ENCODE measurements at regions of chr11 and their contacts with region 1.

Region 1: GRCh38 chr11:62372871-62373270 is 35.6 kb downstream of the ASRGL1 start:
- DNase-seq: no peak
- ATAC-seq: no peak
- H3K4me3 ChIP-seq: no peak overlapping the region
- H3K4me3 Mint-ChIP-seq: no peak overlapping the region
- H3K27ac ChIP-seq: no peak overlapping the region
- H3K27ac Mint-ChIP-seq: peak overlapping the region in 1 of 2 donors; percentile 48
- H3K4me1 ChIP-seq: peaks cover 7% of the 10 kb centered on the region
- H3K4me1 Mint-ChIP-seq: peaks cover 0 to 14% of the 10 kb centered on the region in 2 donors
- H3K27me3 ChIP-seq: no peaks in the 10 kb centered on the region
- H3K27me3 Mint-ChIP-seq: no peaks in the 10 kb centered on the region
- CTCF ChIP-seq: no peak

Region 2: DNA sequence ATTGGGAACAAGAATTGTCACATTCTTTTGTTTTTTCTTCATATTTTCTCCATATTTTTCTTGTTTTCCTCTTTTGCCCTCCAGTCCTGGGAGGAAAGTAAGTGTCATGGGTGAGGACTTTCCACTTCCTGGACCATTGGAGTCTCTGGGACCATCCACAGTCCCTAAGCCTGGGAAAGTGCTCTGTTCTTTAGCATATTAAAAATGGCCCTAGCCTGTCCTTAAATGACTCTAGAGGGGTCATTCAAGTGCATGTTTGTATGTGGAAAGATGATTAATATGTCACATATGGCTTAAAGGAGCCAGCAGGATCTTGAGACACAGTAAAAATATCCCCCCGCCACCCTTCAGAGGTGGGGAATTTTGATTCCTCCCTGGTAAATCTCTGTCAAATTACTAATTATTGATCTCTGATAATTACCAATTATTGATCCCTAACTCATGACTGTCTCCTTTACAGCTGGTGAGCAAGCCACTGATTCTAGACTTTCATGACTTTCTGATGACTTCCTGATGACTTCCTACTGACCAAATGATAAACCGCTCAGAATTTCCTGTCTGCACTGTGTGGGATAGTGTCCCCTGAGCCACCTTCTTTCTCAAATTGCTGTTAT is 202.8 kb before region 1 on chr11:
- intact Hi-C with region 1: loop called (anchors 5 kb)
- DNase-seq: no peak
- ATAC-seq: no peak
- H3K4me3 ChIP-seq: no peak overlapping the region
- H3K4me3 Mint-ChIP-seq: no peak overlapping the region
- H3K27ac ChIP-seq: no peak overlapping the region
- H3K27ac Mint-ChIP-seq: no peak overlapping the region
- H3K4me1 ChIP-seq: no peaks in the 10 kb centered on the region
- H3K4me1 Mint-ChIP-seq: peaks cover 4 to 5% of the 10 kb centered on the region in 2 donors
- H3K27me3 ChIP-seq: no peaks in the 10 kb centered on the region
- H3K27me3 Mint-ChIP-seq: peaks cover 23 to 54% of the 10 kb centered on the region in 2 donors
- CTCF ChIP-seq: no peak

Region 3: GRCh38 chr11:62315431-62315830 is 57.4 kb before region 1 on chr11:
- intact Hi-C with region 1: no loop called
- DNase-seq: no peak
- ATAC-seq: no peak
- H3K4me3 ChIP-seq: no peak overlapping the region
- H3K4me3 Mint-ChIP-seq: no peak overlapping the region
- H3K27ac ChIP-seq: no peak overlapping the region
- H3K27ac Mint-ChIP-seq: no peak overlapping the region
- H3K4me1 ChIP-seq: peaks cover 13% of the 10 kb centered on the region
- H3K4me1 Mint-ChIP-seq: peaks cover 11 to 15% of the 10 kb centered on the region in 2 donors
- H3K27me3 ChIP-seq: peaks cover 3% of the 10 kb centered on the region
- H3K27me3 Mint-ChIP-seq: peaks cover 7 to 28% of the 10 kb centered on the region in 2 donors
- CTCF ChIP-seq: no peak

Region 4: DNA sequence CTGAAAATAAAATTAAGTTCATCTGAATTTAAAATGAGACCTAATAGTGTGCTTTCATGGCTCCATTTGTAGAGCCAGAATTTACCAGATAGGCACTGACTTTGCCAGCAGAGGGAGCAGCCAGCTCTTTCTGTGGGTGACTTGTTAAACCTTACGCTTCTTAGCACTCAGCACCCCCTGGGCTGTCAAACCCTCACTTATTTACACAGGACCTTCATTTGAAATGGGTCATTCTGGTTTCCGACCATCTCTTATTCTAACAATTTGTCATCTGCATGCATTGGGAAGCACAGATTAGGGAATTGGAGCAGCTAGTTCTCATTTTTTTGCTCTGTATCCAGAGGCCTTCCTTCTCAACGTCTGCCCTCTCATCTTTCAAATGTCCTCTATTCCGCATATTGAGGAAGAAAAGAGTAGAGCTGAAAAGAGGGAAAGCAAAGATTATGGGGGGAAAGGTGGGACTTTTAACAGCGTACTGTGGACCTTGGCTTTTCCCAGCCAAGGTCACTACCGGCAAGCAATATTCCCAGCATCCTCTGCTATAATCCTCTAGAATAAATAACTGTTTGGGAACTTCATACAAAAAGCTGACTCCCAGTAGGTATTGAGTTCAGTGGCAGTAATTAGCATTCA is 32.5 kb before region 1 on chr11:
- intact Hi-C with region 1: loop called (anchors 1 kb)
- DNase-seq: peak; percentile 46 to 78
- ATAC-seq: peak; percentile 76 to 81 (median 77)
- H3K4me3 ChIP-seq: no peak overlapping the region
- H3K4me3 Mint-ChIP-seq: peak overlapping the region; percentile 21
- H3K27ac ChIP-seq: no peak overlapping the region
- H3K27ac Mint-ChIP-seq: no peak overlapping the region
- H3K4me1 ChIP-seq: peaks cover 12% of the 10 kb centered on the region
- H3K4me1 Mint-ChIP-seq: peaks cover 21 to 22% of the 10 kb centered on the region in 2 donors
- H3K27me3 ChIP-seq: no peaks in the 10 kb centered on the region
- H3K27me3 Mint-ChIP-seq: peaks cover 8 to 21% of the 10 kb centered on the region in 2 donors
- CTCF ChIP-seq: peak; percentile 63

Region 5: GRCh38 chr11:62353844-62354243 is 19.0 kb before region 1 on chr11:
- intact Hi-C with region 1: no loop called
- DNase-seq: no peak
- ATAC-seq: no peak
- H3K4me3 ChIP-seq: no peak overlapping the region
- H3K4me3 Mint-ChIP-seq: no peak overlapping the region
- H3K27ac ChIP-seq: no peak overlapping the region
- H3K27ac Mint-ChIP-seq: peak overlapping the region in 1 of 2 donors; percentile 8
- H3K4me1 ChIP-seq: peaks cover 9% of the 10 kb centered on the region
- H3K4me1 Mint-ChIP-seq: peaks cover 0 to 9% of the 10 kb centered on the region in 2 donors
- H3K27me3 ChIP-seq: no peaks in the 10 kb centered on the region
- H3K27me3 Mint-ChIP-seq: no peaks in the 10 kb centered on the region
- CTCF ChIP-seq: no peak

Region 6: GRCh38 chr11:62444236-62444833 is 71.5 kb after region 1 on chr11:
- intact Hi-C with region 1: no loop called
- DNase-seq: peak in 1 of 2 donors; percentile 48
- ATAC-seq: peak in 2 of 3 donors; percentile 62 to 70
- H3K4me3 ChIP-seq: peak overlapping the region; percentile 26
- H3K4me3 Mint-ChIP-seq: peak overlapping the region; percentile 82
- H3K27ac ChIP-seq: peak overlapping the region; percentile 56
- H3K27ac Mint-ChIP-seq: peak overlapping the region in 1 of 2 donors; percentile 51
- H3K4me1 ChIP-seq: peaks cover 28% of the 10 kb centered on the region
- H3K4me1 Mint-ChIP-seq: peaks cover 14 to 16% of the 10 kb centered on the region in 2 donors
- H3K27me3 ChIP-seq: no peaks in the 10 kb centered on the region
- H3K27me3 Mint-ChIP-seq: peaks cover 17 to 22% of the 10 kb centered on the region in 2 donors
- CTCF ChIP-seq: no peak

Region 7: DNA sequence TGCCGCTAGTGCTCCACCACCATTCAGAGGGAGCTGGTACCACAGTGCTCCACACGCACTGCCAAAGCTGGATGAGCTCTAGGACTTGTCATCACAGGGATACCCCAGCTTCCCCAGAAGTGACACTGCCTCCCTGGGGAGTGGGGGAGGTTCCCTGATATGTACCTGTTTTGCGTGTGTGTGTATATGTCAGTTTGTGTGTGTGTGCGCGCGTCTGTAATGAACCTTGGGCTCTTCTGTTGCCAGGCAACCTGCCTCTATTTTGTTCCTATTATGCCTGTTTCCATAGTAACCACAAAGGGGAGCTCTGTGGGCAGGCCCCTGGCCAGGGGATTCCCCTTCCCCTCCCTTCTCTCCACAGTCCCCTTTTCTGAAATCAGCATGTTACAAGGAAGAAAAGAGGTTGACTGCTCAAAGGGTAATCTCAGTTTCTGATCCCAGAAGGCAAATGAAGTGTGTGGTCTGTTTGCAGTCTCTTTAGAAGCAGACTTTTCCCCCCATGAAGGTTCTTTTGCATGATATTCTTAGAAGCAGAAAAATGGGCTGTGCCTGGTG is 178.9 kb after region 1 on chr11:
- intact Hi-C with region 1: no loop called
- DNase-seq: peak; percentile 65 to 98
- ATAC-seq: peak; percentile 17 to 47 (median 47)
- H3K4me3 ChIP-seq: no peak overlapping the region
- H3K4me3 Mint-ChIP-seq: peak overlapping the region; percentile 83
- H3K27ac ChIP-seq: peak overlapping the region; percentile 97
- H3K27ac Mint-ChIP-seq: peak overlapping the region; percentile 97 to 98
- H3K4me1 ChIP-seq: peaks cover 78% of the 10 kb centered on the region
- H3K4me1 Mint-ChIP-seq: peaks cover 72 to 75% of the 10 kb centered on the region in 2 donors
- H3K27me3 ChIP-seq: no peaks in the 10 kb centered on the region
- H3K27me3 Mint-ChIP-seq: no peaks in the 10 kb centered on the region
- CTCF ChIP-seq: no peak

Measured in natural killer cell (primary cell).